Mammary epithelial cell (primary cell): ENCODE measurements at regions of chr12 and their contacts with region 1.

Region 1: GRCh38 chr12:108671110-108671509 is 37.4 kb upstream of the SELPLG start:
- DNase-seq: no peak
- H3K4me3 ChIP-seq: no peak overlapping the region
- H3K27ac ChIP-seq: no peak overlapping the region
- H3K4me1 ChIP-seq: peaks cover 5% of the 10 kb centered on the region
- H3K27me3 ChIP-seq: no peaks in the 10 kb centered on the region
- CTCF ChIP-seq: no peak

Region 2: DNA sequence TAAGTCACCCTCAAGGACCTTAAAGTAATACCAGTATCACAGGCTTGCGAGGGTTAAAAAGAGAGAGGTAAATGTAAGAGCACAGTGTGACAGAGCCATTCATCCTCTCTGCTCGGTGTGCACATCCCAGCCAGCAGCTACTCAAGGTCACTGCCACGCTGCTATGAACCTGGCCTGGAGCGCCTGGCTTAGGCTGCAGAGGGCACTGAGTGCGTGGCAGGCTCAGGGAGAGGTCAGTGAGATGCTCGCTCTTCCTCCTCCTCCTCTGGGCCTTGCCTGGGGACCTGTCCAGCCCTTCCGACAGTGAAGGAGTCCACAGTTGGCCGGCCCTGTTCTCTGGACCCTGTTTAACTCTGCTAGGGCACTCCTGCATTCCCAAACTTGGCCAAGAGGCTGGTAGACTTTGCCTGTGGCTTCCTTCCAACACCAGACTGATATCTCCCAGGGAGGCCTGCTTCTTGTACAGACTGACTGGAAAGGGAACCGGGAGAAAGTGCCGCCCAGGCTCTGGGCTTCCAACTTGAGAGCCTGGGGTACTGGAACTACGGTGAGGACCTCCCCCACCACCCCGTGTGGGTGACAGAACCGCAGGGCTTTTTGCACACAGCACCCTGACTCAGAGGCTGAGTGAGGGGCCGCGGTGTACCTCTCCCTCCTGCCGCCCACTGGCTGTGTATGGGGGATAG is 122.8 kb after region 1 on chr12:
- CTCF ChIA-PET with region 1: no interaction called
- dilution Hi-C with region 1: no loop called
- in situ Hi-C with region 1: loop called in 1 of 2 experiments (anchors 5 kb)
- intact Hi-C with region 1: no loop called
- DNase-seq: no peak
- H3K4me3 ChIP-seq: no peak overlapping the region
- H3K27ac ChIP-seq: no peak overlapping the region
- H3K4me1 ChIP-seq: peaks cover 7% of the 10 kb centered on the region
- H3K27me3 ChIP-seq: no peaks in the 10 kb centered on the region
- CTCF ChIP-seq: no peak